Right cardiac atrium (tissue), 5 donors: ENCODE measurements at regions of chrX and their contacts with region 1.

Region 1: GRCh38 chrX:109485470-109486340 is 3.8 kb upstream of the GUCY2F start:
- DNase-seq: peak; percentile 30 to 61 (median 53)
- ATAC-seq: peak in 1 of 2 donors; percentile 53
- H3K4me3 ChIP-seq: no peak overlapping the region
- H3K27ac ChIP-seq: no peak overlapping the region
- H3K4me1 ChIP-seq: no peaks in the 10 kb centered on the region
- H3K27me3 ChIP-seq: no peaks in the 10 kb centered on the region

Region 2: GRCh38 chrX:109578916-109579315 is 93.2 kb after region 1 on chrX:
- intact Hi-C with region 1: no loop called
- DNase-seq: no peak
- ATAC-seq: no peak
- H3K4me3 ChIP-seq: no peak overlapping the region
- H3K27ac ChIP-seq: no peak overlapping the region
- H3K4me1 ChIP-seq: no peaks in the 10 kb centered on the region
- H3K27me3 ChIP-seq: no peaks in the 10 kb centered on the region

Region 3: GRCh38 chrX:109626637-109627036 is 140.9 kb after region 1 on chrX:
- intact Hi-C with region 1: loop called in 3 of 4 experiments (anchors 2 to 10 kb)
- DNase-seq: no peak
- ATAC-seq: no peak
- H3K4me3 ChIP-seq: no peak overlapping the region
- H3K27ac ChIP-seq: no peak overlapping the region
- H3K4me1 ChIP-seq: no peaks in the 10 kb centered on the region
- H3K27me3 ChIP-seq: no peaks in the 10 kb centered on the region

Region 4: DNA sequence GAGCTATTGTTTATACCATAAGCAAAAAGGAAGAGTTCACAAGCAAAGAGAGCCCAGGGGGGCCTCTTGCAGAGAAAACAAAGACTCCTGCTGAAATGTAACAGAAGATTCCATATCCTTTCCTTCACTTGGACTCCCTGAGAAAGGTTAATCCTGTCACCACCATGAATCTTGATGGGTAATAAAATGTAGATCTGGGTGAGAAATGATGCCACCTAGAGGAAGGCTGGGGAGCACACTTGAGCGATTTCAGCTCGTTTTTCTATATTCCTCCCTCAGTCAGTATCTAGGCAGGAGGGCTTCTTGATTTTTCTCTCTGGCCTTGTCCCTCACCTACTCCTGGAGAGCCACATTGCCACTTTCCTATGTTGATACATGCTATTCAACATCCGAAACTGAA is 149.5 kb after region 1 on chrX:
- intact Hi-C with region 1: loop called in 2 of 4 experiments (anchors 5 to 10 kb)
- DNase-seq: no peak
- ATAC-seq: no peak
- H3K4me3 ChIP-seq: no peak overlapping the region
- H3K27ac ChIP-seq: no peak overlapping the region
- H3K4me1 ChIP-seq: no peaks in the 10 kb centered on the region
- H3K27me3 ChIP-seq: no peaks in the 10 kb centered on the region

Region 5: DNA sequence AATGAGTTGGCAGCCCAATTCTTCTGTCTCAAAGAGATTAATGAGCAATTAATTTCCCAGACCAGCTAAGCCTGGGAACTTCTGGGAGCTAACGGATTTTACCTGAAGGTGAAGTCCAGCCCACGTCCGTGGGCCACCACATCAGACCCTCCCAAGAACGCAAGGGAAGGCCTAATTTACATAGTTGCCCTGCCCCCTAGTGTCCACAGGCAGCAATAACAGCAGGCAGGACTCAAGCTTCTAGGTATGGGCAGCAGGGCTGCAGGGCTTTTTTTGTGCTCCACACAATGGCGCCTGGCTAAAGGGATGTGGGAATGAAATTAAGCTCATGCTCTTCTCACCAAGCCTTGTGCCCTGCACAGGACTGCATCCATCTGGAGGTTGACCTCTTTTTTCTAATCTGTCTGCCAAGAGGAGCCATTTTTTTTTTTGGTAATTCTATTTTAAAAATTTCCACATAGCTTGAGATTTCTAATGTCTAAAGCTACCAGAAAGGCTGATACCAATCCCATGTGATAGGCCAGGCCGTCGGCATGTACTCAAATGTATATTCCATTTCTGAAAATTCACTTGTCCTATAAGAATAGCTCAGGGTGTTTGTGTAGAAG is 405.3 kb after region 1 on chrX:
- intact Hi-C with region 1: loop called in 1 of 4 experiments (anchors 10 kb)
- DNase-seq: peak; percentile 43 to 71 (median 68)
- ATAC-seq: peak; percentile 71 to 80
- H3K4me3 ChIP-seq: no peak overlapping the region
- H3K27ac ChIP-seq: no peak overlapping the region
- H3K4me1 ChIP-seq: no peaks in the 10 kb centered on the region
- H3K27me3 ChIP-seq: no peaks in the 10 kb centered on the region

Region 6: DNA sequence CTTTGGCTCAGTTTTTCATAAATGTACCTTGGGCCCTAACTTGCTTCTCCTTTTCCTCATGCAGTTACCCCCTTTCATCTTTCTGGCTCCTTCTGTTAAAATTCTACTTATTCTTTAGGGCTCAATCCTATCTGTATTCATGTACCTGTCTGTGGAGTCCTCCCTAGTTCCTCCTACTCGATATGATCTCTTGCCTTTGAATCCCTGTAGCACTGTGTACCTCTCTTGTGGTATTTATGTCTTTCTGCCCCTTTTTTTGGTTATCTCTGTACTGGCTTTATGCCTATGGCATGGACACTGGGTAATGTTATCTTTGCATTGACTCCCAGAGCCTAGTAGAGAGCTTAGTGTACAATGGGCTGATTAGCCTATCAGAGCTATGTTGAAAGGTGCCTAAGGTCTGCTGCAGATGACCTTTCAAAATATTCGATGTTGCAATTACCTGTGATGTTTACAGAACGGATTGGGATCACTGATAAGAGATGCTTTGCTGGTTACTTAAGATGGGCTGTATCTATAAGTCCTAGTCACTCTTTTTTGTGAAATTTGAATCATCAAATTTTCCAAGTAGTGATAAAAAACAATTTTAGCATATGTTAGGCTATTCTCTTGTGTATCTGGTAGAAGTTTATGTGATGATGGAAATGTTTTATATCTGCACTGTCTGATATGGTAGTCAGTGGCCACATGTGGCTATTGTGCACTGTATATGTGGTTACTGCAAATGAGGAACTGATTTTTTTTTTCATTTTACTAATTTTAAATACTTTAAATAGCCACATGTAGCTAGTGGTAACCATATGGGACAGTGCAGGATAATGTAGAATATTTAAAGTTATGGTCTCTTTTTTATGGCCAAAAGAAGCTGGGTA is 550.7 kb after region 1 on chrX:
- intact Hi-C with region 1: no loop called
- DNase-seq: no peak
- ATAC-seq: no peak
- H3K4me3 ChIP-seq: no peak overlapping the region
- H3K27ac ChIP-seq: no peak overlapping the region
- H3K4me1 ChIP-seq: peaks cover 3% of the 10 kb centered on the region
- H3K27me3 ChIP-seq: no peaks in the 10 kb centered on the region